H1 (cell line): ENCODE measurements at regions of chr10 and their contacts with region 1.

Region 1: DNA sequence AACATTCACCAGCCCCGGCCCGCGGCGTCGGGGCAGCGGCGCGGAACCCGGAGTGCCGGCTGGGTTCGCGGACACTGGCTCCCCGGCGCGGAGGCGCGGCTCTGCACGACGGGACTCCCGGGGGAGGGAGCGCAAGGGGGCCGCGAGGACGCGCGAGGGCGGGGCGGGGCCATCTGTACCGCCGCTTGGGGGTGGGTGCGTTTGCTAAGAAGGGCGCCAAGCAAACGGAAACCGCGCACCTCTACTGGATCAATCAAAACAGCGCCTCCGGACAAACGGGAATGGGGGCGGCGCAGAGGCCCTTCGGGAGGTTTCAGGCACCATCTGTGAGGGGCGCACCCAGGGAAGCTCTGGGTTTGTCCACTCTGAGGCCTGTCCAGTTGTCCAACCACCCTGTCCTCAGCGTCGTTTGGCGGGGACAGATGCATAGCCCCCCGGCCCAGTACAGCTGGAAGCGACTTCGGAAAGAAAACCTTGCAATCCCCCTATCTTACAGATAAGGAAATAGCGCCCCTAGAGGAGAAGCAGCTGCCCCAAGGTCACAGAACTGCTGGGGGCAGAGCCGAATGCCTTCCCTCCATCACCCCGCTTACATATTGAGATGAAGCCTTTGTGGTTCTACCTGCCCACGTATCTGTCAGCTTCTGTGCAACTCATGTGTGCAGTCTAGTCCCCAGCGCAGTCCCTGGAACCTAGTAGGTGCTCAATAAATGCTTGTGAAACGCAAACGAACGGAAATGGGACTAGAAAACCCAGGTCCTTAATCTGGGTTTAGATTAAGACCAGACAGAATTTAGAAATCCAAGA is 10.7 kb upstream of the SLIT1 start:
- DNase-seq: peak; percentile 56 to 85
- H3K4me3 ChIP-seq: peak overlapping the region; percentile 49 to 76 (median 64)
- H3K27ac ChIP-seq: no peak overlapping the region
- H3K4me1 ChIP-seq: peaks cover 2 to 9% (median 5%) of the 10 kb centered on the region in 4 experiments; a peak in 5 of 7 replicates
- H3K27me3 ChIP-seq: peaks cover 0 to 12% (median 7%) of the 10 kb centered on the region in 4 experiments; a peak in 5 of 7 replicates
- CTCF ChIP-seq: peak; percentile 73 to 89 (median 83)
- EP300 ChIP-seq: no peak
- POLR2A ChIP-seq: no peak
- RAD21 ChIP-seq: peak; percentile 55 to 73

Region 2: DNA sequence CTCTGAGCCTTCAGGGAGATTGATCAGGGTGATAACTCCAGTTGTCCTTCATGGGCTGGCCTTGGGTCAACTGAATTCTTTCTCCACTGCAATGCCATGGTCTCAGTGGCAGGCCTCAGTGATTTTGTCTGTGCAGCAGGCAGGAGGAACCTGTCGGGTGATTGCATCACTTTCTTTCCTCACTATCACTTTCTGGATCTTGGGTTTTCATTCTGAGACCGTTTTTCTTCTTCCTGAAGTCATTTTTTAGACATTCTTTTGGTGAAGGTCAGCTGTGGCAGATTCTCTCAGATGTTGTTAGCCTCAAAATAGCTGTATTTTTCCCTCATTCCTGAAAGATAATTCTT is 393.1 kb before region 1 on chr10:
- CTCF ChIA-PET with region 1: no interaction called
- POLR2A ChIA-PET with region 1: no interaction called
- DNase-seq: no peak
- H3K4me3 ChIP-seq: no peak overlapping the region
- H3K27ac ChIP-seq: no peak overlapping the region
- H3K4me1 ChIP-seq: no peaks in the 10 kb centered on the region
- H3K27me3 ChIP-seq: no peaks in the 10 kb centered on the region
- CTCF ChIP-seq: no peak
- EP300 ChIP-seq: no peak
- POLR2A ChIP-seq: no peak
- RAD21 ChIP-seq: no peak

Region 3: GRCh38 chr10:97037365-97038361 is 158.8 kb before region 1 on chr10:
- CTCF ChIA-PET with region 1: interaction called, 19 read pairs
- POLR2A ChIA-PET with region 1: no interaction called
- DNase-seq: peak; percentile 83 to 94
- H3K4me3 ChIP-seq: peak overlapping the region in 2 of 4 experiments; percentile 17 to 25; a peak in 2 of 8 replicates
- H3K27ac ChIP-seq: no peak overlapping the region
- H3K4me1 ChIP-seq: peaks cover under 1 to 7% (median 4%) of the 10 kb centered on the region in 4 experiments; a peak in 6 of 7 replicates
- H3K27me3 ChIP-seq: no peaks in the 10 kb centered on the region; a peak in 1 of 7 replicates
- CTCF ChIP-seq: peak; percentile 90 to 93 (median 90)
- EP300 ChIP-seq: no peak
- POLR2A ChIP-seq: no peak
- RAD21 ChIP-seq: peak; percentile 81 to 90

Region 4: DNA sequence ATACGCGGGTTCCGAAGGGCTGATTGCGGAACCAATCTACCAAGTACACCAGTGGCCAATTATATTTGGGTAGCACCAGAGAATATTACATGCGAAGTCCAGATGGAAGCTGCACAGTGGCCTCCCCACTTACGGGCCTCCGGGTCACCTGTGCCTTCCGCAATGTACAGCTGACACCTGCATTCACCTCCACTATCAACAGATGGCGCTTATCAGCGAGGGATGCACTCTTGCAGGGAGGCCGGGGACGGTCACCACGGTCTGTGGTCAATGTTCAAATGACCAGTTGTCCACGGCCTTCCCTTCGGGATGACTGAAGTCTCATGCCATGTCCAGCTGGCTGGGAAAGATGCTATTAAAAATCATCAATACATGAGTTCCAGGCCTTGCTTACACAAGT is 58.3 kb before region 1 on chr10:
- CTCF ChIA-PET with region 1: interaction called, 11 read pairs
- POLR2A ChIA-PET with region 1: interaction called, 3 read pairs
- DNase-seq: no peak
- H3K4me3 ChIP-seq: no peak overlapping the region
- H3K27ac ChIP-seq: no peak overlapping the region
- H3K4me1 ChIP-seq: peaks cover 6 to 18% (median 14%) of the 10 kb centered on the region in 4 experiments
- H3K27me3 ChIP-seq: peaks cover 0 to 5% (median 2%) of the 10 kb centered on the region in 4 experiments; a peak in 3 of 7 replicates
- CTCF ChIP-seq: peak; percentile 65 to 87 (median 73)
- EP300 ChIP-seq: no peak
- POLR2A ChIP-seq: no peak
- RAD21 ChIP-seq: peak; percentile 59 to 64

Region 5: GRCh38 chr10:97179731-97180362 is 16.6 kb before region 1 on chr10:
- CTCF ChIA-PET with region 1: interaction called, 106 read pairs
- POLR2A ChIA-PET with region 1: interaction called, 4 read pairs
- DNase-seq: peak; percentile 31 to 87
- H3K4me3 ChIP-seq: peak overlapping the region in 3 of 4 experiments; percentile 16 to 48 (median 27); a peak in 5 of 8 replicates
- H3K27ac ChIP-seq: no peak overlapping the region
- H3K4me1 ChIP-seq: peaks cover under 1 to 3% (median 2%) of the 10 kb centered on the region in 4 experiments; a peak in 6 of 7 replicates
- H3K27me3 ChIP-seq: peaks cover 10 to 30% (median 22%) of the 10 kb centered on the region in 4 experiments
- CTCF ChIP-seq: peak; percentile 80 to 84 (median 83)
- EP300 ChIP-seq: no peak
- POLR2A ChIP-seq: no peak
- RAD21 ChIP-seq: peak; percentile 80 to 88

Region 6: DNA sequence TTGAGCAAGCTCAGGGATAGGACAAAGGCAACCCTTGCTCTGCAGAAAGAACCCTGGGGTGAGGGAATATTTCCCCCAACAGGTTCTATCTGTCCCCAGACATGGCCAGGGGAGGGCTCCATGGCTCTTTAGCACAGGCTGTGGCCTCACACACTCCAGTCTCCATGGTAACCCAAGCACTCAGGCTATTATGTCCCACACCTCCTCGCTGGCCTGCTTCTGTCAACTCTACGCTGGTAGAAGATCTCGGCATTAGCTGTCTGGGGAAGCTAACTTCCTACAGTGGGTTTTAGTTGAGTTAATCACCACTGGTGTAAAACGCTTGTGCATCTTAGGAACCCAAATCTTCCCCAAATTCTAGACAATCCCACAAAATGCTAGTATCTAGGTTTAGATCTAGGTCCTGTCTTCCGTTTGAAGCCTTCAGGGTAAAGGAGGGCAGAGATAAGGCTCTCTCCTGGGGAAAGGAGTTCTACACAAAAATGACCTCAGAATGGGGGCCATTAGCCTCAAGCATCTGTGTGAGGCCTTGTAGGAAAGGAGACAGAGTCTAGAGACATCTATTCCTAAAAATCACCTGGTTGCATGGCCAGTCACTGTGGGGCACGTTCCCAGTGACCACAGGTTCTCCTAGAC is 26.0 kb after region 1 on chr10:
- CTCF ChIA-PET with region 1: interaction called, 21 read pairs
- POLR2A ChIA-PET with region 1: interaction called, 3 read pairs
- DNase-seq: peak in 1 of 2 experiments; percentile 17
- H3K4me3 ChIP-seq: no peak overlapping the region; a peak in 1 of 8 replicates
- H3K27ac ChIP-seq: no peak overlapping the region
- H3K4me1 ChIP-seq: peaks cover 0 to 7% (median 4%) of the 10 kb centered on the region in 4 experiments; a peak in 6 of 7 replicates
- H3K27me3 ChIP-seq: no peaks in the 10 kb centered on the region
- CTCF ChIP-seq: peak in 2 of 3 experiments; percentile 23 to 37; a peak in 2 of 4 replicates
- EP300 ChIP-seq: no peak
- POLR2A ChIP-seq: no peak
- RAD21 ChIP-seq: peak; percentile 50; a peak in 3 of 4 replicates

Region 7: DNA sequence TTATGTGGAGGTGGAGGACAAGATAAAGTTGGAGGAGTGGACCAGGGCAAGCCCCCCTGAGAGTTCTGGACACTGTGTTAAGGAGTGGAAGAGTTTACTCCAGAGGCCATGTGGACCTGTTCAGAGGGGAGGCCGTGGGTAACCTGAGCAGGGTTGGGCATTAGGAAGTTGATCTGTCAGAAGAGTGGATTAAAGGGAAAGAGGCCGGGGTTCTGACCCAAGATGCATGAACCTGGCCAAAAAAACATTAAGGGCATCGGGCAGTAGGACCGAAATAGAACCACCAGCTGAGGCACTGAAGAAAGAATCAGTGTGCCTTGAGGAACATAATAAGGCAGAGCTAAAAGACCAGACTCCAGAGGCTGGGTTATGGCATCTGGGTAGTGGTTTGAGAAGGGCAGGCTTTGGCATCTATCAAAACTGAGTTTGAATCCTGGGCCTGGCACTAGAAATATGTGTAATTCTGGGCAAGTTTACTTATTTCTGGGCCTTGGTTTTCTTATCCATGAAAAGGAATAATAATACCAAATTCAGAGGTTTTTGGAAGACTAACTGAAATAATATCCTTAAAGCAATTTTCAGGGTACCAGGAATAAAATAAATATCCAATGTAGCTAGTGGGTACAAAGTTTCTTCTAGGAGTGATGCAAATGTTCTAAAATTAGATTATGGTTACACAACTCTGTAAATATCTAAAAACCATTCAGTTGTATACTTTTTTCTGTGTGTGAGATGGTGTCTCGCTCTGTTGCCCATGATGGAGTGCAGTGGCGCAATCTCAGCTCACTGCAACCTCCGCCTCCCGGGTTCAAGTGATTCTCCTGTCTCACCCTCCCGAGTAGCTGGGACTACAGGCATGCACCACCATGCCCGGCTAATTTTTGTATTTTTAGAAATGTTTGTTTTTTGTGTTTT is 111.7 kb after region 1 on chr10:
- CTCF ChIA-PET with region 1: no interaction called
- POLR2A ChIA-PET with region 1: no interaction called
- DNase-seq: no peak
- H3K4me3 ChIP-seq: no peak overlapping the region
- H3K27ac ChIP-seq: no peak overlapping the region
- H3K4me1 ChIP-seq: no peaks in the 10 kb centered on the region
- H3K27me3 ChIP-seq: no peaks in the 10 kb centered on the region; a peak in 1 of 7 replicates
- CTCF ChIP-seq: no peak
- EP300 ChIP-seq: no peak
- POLR2A ChIP-seq: no peak
- RAD21 ChIP-seq: no peak